Activated CD4-positive, alpha-beta T cell treated with anti-CD3 and anti-CD28 coated beads, Interleukin-2, amount 10 ng/mL, durations not matched to agents 24 days and 14 days (primary cell): ENCODE measurements at regions of chr11 and their contacts with region 1.

Region 1: GRCh38 chr11:118343981-118344515 is at the start of gene CD3G:
- DNase-seq: peak; percentile 92
- H3K4me3 Mint-ChIP-seq: peak within 1 kb of the TSS; percentile 90
- H3K27ac Mint-ChIP-seq: peak within 1 kb of the TSS; percentile 100
- H3K4me1 Mint-ChIP-seq: peaks cover 73% of the 10 kb centered on the region
- H3K27me3 Mint-ChIP-seq: no peaks in the 10 kb centered on the region
- total RNA-seq, gene CD3G: 143 and 145 TPM in 2 replicates

Region 2: DNA sequence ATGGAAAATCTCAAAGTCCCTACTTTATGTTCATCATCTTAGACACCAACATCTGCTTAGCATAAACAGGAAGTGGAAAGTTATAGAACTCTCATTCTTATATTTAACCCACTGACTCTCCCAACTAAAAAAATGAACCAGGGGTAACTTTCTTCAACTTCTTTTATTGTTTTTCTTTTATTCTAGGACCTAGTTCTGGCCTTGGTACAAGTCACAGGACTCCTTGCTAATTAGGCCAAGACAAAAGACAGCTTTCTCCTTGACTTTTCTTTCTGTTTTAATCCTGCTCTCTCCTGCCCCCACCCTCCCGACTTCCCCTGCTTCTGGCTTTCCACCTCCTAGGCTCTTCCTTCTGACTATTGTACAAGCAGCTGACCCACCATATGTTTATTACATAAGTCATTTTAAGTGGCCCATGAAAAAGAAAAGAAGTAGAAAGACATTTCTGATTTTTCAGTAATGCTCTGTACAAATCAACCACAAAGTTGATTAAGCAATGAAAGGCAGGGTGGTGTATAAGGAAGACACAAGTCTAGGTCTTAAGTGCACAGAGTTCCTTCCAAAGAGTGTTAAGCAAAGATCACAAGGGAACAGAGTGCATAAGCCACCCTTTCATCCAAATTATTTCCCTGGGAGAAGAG is 137.5 kb before region 1 on chr11:
- intact Hi-C with region 1: loop called (anchors 2 kb)
- DNase-seq: no peak
- H3K4me3 Mint-ChIP-seq: peak overlapping the region; percentile 65
- H3K27ac Mint-ChIP-seq: no peak overlapping the region
- H3K4me1 Mint-ChIP-seq: peaks cover 47% of the 10 kb centered on the region
- H3K27me3 Mint-ChIP-seq: no peaks in the 10 kb centered on the region

Region 3: GRCh38 chr11:118247047-118247446 is 97.0 kb before region 1 on chr11:
- intact Hi-C with region 1: loop called (anchors 2 kb)
- DNase-seq: peak; percentile 62
- H3K4me3 Mint-ChIP-seq: peak overlapping the region; percentile 55
- H3K27ac Mint-ChIP-seq: peak overlapping the region; percentile 95
- H3K4me1 Mint-ChIP-seq: peaks cover 65% of the 10 kb centered on the region
- H3K27me3 Mint-ChIP-seq: no peaks in the 10 kb centered on the region

Region 4: GRCh38 chr11:118359295-118359958 is 15.4 kb after region 1 on chr11 and contains the start of gene UBE4A:
- intact Hi-C with region 1: loop called (anchors 2 kb)
- DNase-seq: peak; percentile 99
- H3K4me3 Mint-ChIP-seq: peak within 1 kb of the TSS; percentile 93
- H3K27ac Mint-ChIP-seq: peak within 1 kb of the TSS; percentile 91
- H3K4me1 Mint-ChIP-seq: peaks cover 36% of the 10 kb centered on the region
- H3K27me3 Mint-ChIP-seq: peaks cover 2% of the 10 kb centered on the region
- total RNA-seq, gene UBE4A: 46.3 and 47.9 TPM in 2 replicates